ENCODE measurements at regions of chr7 and their contacts with region 1.

Region 1: DNA sequence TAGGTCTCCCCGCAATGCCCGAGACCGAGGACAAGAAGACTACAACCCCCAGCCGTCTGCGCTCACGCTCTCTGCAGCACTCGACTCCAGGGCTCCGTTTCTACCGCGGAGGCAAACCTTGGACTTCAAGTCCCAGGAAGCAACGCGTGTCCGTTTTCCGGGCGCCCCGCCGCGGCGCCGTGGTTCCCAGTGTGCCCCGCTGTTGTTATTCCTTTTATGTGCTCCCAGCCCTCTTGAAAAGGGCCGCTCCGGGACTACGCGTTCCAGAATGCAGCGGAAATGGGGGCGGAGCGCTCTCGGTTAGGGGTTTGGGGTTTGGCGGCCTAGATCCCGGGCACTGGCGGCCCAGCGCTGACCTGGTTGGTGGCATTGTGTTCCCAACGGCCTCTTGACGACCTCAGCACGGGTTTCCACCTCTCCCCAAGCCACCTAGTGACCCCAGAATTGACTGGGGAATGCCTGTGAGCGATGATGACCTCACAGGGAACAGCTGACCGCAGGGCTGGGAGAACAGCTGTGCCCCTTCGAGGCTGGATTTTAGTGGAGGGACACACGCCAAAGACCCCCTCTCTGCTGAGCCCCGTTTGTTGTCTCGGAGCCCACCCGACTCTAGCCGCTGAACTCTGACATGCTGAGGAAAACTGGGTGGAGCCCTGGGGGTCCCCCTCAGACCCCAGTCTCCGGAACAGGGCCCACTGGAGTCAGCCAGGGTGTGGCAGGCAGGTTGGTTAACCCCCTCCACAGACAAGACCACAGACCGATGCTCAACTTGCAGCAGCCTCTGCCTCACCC is 488 bp upstream of the CDK5 start:
- DNase-seq: peak; percentile 98 to 100
- H3K4me3 ChIP-seq: peak overlapping the region; percentile 92 to 95
- H3K27ac ChIP-seq: peak overlapping the region; percentile 85 to 95
- H3K4me1 ChIP-seq: peaks cover 21 to 44% of the 10 kb centered on the region in 2 donors
- H3K27me3 ChIP-seq: no peaks in the 10 kb centered on the region
- CTCF ChIP-seq: no peak

Region 2: DNA sequence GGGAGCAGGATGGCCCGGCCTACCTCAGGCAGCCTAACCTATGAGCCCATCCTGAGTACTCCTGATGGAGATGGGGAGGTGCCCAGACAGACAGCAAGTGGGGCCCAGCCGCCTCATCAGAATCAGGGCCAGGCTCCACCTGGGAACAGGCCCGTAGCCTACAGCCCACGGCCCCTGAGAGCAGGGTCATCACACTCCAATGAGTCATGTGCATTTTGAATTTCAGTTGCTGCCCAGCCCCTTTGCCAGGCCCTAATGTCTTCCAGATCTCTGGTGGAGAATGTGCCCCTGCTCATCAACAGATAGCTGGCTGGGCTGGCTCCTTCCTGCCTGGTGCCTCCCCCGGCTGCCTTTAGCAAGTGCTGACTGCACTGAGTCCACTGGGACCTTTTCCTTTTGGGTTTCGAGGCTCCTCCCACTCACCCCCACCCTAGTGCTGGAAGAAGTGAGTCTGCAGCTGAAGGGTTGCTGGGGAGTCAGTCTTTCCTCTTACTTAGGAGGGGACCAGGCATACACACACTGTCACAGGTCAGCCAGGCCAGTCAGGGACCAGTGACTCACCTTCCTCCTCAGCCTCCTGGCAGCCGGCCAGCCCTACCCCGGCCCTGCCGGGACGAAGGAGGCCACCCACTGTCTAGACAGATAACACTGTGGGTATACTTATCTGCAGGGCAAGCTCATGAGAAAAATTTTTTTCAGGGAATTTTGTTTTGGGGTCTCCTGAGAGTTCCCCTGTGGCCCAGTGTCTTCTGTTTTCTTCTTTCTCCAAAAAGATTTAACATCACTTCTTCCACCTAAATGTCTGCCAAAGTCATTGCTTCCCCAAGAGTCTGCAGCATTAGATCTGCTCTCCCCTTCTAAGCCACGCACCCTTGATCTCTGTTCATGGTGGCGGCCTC is 19.0 kb before region 1 on chr7:
- intact Hi-C with region 1: loop called (anchors 2 kb)
- DNase-seq: peak; percentile 73 to 92
- H3K4me3 ChIP-seq: no peak overlapping the region
- H3K27ac ChIP-seq: peak overlapping the region; percentile 52 to 62
- H3K4me1 ChIP-seq: peaks cover 6 to 9% of the 10 kb centered on the region in 2 donors
- H3K27me3 ChIP-seq: no peaks in the 10 kb centered on the region
- CTCF ChIP-seq: no peak

Region 3: GRCh38 chr7:151080522-151081169 is 22.5 kb after region 1 on chr7 and contains the start of gene FASTK:
- intact Hi-C with region 1: loop called (anchors 1 kb)
- DNase-seq: peak; percentile 84 to 95
- H3K4me3 ChIP-seq: peak within 1 kb of the TSS; percentile 75 to 87
- H3K27ac ChIP-seq: peak within 1 kb of the TSS; percentile 95 to 96
- H3K4me1 ChIP-seq: peaks cover 24 to 35% of the 10 kb centered on the region in 2 donors
- H3K27me3 ChIP-seq: no peaks in the 10 kb centered on the region
- CTCF ChIP-seq: no peak
- total RNA-seq, gene FASTK: 121 TPM

Region 4: DNA sequence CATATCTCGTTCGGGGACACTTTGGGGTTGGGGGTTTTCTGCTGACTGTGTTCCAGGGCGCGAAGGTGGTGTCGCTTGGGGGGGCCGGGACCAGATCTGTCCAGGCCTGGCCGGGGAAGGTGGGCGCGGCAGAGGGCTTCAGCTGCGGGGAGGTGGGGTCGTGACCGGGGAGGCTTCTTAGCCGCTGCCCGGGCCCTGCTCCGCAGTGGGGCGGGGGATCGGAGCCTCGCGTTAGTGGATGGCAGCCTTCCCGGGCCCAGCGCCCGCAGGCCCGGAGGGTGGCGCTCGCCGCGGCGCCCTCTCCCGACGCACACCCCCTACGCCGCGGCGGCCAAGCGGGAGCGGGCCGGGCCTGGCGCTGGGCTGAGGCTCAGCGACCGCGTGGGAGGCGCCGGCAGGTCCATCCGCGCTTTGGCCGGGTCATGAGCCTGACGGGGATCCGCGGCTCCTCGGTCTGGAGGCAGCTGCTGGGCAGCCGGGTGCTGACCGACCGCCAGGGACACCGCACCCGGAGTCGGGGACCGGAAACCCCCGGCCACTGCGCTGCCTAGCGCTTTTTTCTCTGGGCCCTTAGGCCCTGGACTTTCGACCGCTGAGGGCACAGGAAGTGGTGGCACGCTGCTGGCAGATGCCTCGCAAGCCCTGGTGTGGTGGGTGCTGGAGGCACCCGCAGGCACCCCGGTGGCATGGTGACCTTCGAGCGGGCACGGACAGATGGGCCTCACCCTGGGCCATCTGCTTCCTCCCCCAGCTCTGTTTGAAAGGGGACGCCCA is 29.2 kb after region 1 on chr7:
- intact Hi-C with region 1: loop called (anchors 1 kb)
- DNase-seq: no peak
- H3K4me3 ChIP-seq: peak overlapping the region; percentile 63 to 85
- H3K27ac ChIP-seq: peak overlapping the region; percentile 64 to 82
- H3K4me1 ChIP-seq: peaks cover 10 to 36% of the 10 kb centered on the region in 2 donors
- H3K27me3 ChIP-seq: no peaks in the 10 kb centered on the region
- CTCF ChIP-seq: peak in 2 of 3 experiments; percentile 10 to 29

Region 5: DNA sequence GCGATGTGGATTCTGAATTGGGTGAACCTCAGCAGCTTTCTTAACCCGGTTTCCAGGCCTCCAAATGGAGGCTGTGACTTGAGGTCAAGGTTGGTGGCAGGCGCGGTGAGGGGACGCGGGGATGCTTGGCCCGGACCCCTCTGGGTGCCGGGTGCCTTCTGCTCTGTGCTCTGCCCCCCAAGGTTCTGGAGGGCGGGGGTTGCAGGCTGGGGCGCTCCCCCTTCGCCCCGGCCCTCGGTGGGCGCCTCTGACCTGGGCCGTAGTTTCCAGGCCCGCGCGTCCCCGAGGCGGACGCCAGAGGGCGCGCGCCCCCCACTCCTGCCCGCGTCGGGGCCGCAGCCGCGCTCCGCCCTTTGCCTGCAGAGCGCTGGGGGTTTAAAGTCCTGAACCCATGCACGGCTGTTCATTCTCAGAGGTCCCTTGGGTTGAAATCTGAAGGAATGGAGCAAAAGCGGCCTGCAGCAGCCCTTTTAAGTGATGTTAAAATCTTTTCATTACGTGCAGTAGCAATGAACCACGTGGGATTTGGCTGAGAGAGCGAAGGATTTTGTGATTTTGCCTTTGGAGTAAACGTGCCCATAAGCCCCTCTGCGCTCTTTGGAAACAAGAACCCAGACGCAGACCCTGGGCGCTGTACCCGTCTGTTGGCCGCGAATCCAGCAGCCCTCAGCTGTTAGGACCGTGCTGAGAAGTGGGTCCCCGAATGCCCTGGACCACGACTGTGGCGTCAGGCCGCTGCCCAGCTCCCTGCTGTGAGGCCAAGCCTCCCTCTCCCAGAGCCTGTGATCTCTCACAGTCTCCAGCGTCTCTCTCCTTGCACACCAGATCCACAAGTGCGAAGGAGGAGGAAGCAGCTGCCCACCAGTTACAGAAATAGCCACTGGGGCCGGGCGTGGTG is 1836.3 kb after region 1 on chr7:
- intact Hi-C with region 1: no loop called
- DNase-seq: no peak
- H3K4me3 ChIP-seq: no peak overlapping the region
- H3K27ac ChIP-seq: no peak overlapping the region
- H3K4me1 ChIP-seq: no peaks in the 10 kb centered on the region
- H3K27me3 ChIP-seq: no peaks in the 10 kb centered on the region
- CTCF ChIP-seq: peak in 2 of 3 experiments; percentile 10 to 45

Measured in ascending aorta (tissue), 2 donors.